Activated CD4-positive, alpha-beta memory T cell treated with anti-CD3 and anti-CD28 coated beads for 36 hours (primary cell): ENCODE measurements at regions of chr11 and their contacts with region 1.

Region 1: GRCh38 chr11:73034777-73035176 is 107.3 kb downstream of the FCHSD2 start:
- DNase-seq: no peak
- H3K4me3 Mint-ChIP-seq: peak overlapping the region; percentile 23
- H3K27ac Mint-ChIP-seq: peak overlapping the region; percentile 83
- H3K4me1 Mint-ChIP-seq: peaks cover 36% of the 10 kb centered on the region
- H3K27me3 Mint-ChIP-seq: no peaks in the 10 kb centered on the region

Region 2: GRCh38 chr11:72969894-72970335 is 64.9 kb before region 1 on chr11:
- CTCF ChIA-PET with region 1: no interaction called
- POLR2A ChIA-PET with region 1: no interaction called
- intact Hi-C with region 1: loop called (anchors 1 kb)
- DNase-seq: no peak
- H3K4me3 Mint-ChIP-seq: no peak overlapping the region
- H3K27ac Mint-ChIP-seq: peak overlapping the region; percentile 24
- H3K4me1 Mint-ChIP-seq: peaks cover 45% of the 10 kb centered on the region
- H3K27me3 Mint-ChIP-seq: no peaks in the 10 kb centered on the region

Region 3: GRCh38 chr11:72989727-72990126 is 45.0 kb before region 1 on chr11:
- CTCF ChIA-PET with region 1: no interaction called
- POLR2A ChIA-PET with region 1: no interaction called
- intact Hi-C with region 1: no loop called
- DNase-seq: no peak
- H3K4me3 Mint-ChIP-seq: no peak overlapping the region
- H3K27ac Mint-ChIP-seq: no peak overlapping the region
- H3K4me1 Mint-ChIP-seq: peaks cover 5% of the 10 kb centered on the region
- H3K27me3 Mint-ChIP-seq: no peaks in the 10 kb centered on the region

Region 4: DNA sequence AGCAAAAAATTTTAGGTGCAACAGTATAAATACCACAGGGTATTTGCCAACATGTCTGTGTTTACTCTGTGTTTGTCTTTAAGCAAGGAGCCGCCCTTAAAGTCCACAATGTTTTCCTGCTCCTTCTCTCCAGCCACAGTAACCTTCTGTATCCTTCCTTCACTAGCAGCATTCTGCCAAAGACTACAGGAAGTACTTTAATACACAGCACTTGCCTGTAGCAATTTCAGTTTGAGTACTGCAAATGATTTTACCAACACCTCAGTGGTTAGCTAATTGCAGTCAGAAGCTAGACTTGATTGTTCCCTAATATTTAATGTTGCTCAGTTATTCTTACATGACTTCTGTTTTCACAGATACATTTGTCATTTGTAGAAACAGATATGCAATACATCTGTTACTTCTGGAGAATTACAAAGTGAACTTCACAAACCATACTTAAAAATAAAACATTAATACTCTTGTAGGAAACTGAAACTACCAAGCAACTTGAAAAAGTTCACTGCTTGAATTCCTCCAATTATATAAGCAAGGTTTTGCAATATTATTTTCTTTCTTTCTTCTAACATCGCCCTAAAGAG is 38.2 kb after region 1 on chr11:
- CTCF ChIA-PET with region 1: no interaction called
- POLR2A ChIA-PET with region 1: no interaction called
- intact Hi-C with region 1: loop called (anchors 5 kb)
- DNase-seq: no peak
- H3K4me3 Mint-ChIP-seq: no peak overlapping the region
- H3K27ac Mint-ChIP-seq: no peak overlapping the region
- H3K4me1 Mint-ChIP-seq: peaks cover 33% of the 10 kb centered on the region
- H3K27me3 Mint-ChIP-seq: no peaks in the 10 kb centered on the region

Region 5: GRCh38 chr11:73141848-73142286 is 107.1 kb after region 1 on chr11:
- CTCF ChIA-PET with region 1: interaction called, 8 read pairs
- POLR2A ChIA-PET with region 1: interaction called, 4 read pairs
- intact Hi-C with region 1: loop called (anchors 2 kb)
- DNase-seq: peak; percentile 65
- H3K4me3 Mint-ChIP-seq: peak overlapping the region; percentile 90
- H3K27ac Mint-ChIP-seq: peak overlapping the region; percentile 88
- H3K4me1 Mint-ChIP-seq: peaks cover 36% of the 10 kb centered on the region
- H3K27me3 Mint-ChIP-seq: no peaks in the 10 kb centered on the region